Endothelial cell of umbilical vein (primary cell): ENCODE measurements at regions of chr9 and their contacts with region 1.

Region 1: GRCh38 chr9:36166101-36166927 is 2.9 kb upstream of the CCIN start:
- DNase-seq: peak; percentile 80
- H3K4me3 ChIP-seq: peak overlapping the region in 2 of 3 experiments; percentile 4 to 51
- H3K27ac ChIP-seq: no peak overlapping the region
- H3K4me1 ChIP-seq: peaks cover 16% of the 10 kb centered on the region
- H3K27me3 ChIP-seq: no peaks in the 10 kb centered on the region
- CTCF ChIP-seq: peak; percentile 89 to 95
- POLR2A ChIP-seq: no peak

Region 2: DNA sequence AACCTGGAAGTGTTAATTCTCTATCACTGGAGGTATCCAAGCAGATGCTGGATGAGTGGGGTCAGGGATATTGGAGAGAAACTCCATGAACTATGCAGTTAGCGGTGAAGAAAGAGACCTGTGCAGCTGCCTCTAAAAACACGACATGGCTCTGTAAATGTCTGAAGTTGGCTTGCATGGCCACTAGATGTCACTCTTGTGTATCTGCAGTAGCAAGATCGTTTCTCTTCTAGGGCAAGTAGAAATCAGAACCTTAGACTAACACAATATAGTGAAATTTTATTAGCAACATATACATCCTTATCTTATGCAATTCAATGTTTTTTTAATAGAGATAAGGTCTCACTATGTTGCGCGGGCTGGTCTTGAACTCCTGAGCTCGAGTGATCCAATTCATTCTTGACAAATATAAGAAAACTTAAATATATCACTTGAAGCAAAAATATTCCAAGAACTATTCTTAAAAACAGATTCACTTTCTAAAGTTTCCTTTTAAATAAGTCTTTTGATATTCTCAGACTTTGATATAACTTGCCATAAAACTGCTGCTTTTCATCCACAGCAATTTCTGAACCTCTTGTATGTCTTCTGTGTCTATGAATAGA is 211.3 kb before region 1 on chr9:
- CTCF ChIA-PET with region 1: interaction called, 34 read pairs
- POLR2A ChIA-PET with region 1: no interaction called
- dilution Hi-C with region 1: no loop called
- intact Hi-C with region 1: loop called (anchors 1 kb)
- DNase-seq: peak; percentile 79
- H3K4me3 ChIP-seq: no peak overlapping the region
- H3K27ac ChIP-seq: no peak overlapping the region
- H3K4me1 ChIP-seq: peaks cover 19% of the 10 kb centered on the region
- H3K27me3 ChIP-seq: no peaks in the 10 kb centered on the region
- CTCF ChIP-seq: peak; percentile 71 to 75
- POLR2A ChIP-seq: no peak

Region 3: GRCh38 chr9:36023260-36024048 is 142.9 kb before region 1 on chr9:
- CTCF ChIA-PET with region 1: interaction called, 13 read pairs
- POLR2A ChIA-PET with region 1: no interaction called
- dilution Hi-C with region 1: no loop called
- intact Hi-C with region 1: loop called (anchors 1 kb)
- DNase-seq: peak; percentile 71
- H3K4me3 ChIP-seq: no peak overlapping the region
- H3K27ac ChIP-seq: no peak overlapping the region
- H3K4me1 ChIP-seq: no peaks in the 10 kb centered on the region
- H3K27me3 ChIP-seq: no peaks in the 10 kb centered on the region
- CTCF ChIP-seq: peak; percentile 71 to 79
- POLR2A ChIP-seq: no peak

Region 4: DNA sequence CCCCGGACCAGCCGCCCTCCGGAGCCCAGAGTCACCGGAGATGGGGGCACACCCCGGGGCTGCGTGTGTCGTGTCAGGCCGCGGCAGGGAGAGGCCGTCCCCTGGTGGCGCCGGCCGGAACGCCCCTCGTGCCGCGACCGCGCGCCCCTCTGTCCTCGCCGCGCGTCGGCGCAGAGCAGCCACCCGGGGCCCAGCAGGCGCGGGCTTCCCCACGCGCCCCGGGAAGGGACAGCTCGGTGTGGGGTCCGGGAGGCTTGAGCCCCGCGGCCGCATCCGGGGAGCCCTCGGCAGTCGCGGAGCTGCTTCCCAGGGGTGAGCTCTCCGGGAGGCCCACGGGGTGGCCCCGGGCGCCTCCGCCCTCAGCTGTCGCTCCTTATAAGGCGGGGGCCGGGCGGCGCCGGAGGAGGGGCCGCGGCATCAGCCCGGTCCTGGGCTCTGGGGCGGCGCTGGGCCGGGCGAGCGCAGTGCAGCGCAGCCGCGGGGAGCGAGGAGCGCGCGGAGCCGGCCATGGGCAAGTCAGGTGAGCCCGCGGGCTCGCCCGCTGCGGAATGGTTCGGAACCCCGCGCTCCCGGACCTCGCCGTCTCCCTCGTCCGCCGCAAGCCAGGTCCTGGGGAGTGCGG is 29.9 kb before region 1 on chr9 and contains the start of gene GLIPR2:
- CTCF ChIA-PET with region 1: interaction called, 76 read pairs
- POLR2A ChIA-PET with region 1: no interaction called
- dilution Hi-C with region 1: no loop called
- intact Hi-C with region 1: loop called (anchors 1 kb)
- DNase-seq: peak; percentile 55
- H3K4me3 ChIP-seq: peak within 1 kb of the TSS; percentile 40 to 62 (median 61)
- H3K27ac ChIP-seq: peak within 1 kb of the TSS; percentile 16
- H3K4me1 ChIP-seq: peaks cover 11% of the 10 kb centered on the region
- H3K27me3 ChIP-seq: no peaks in the 10 kb centered on the region
- CTCF ChIP-seq: peak; percentile 12 to 23
- POLR2A ChIP-seq: no peak
- total RNA-seq, gene GLIPR2: 20.0 and 22.0 TPM in 2 replicates

Region 5: DNA sequence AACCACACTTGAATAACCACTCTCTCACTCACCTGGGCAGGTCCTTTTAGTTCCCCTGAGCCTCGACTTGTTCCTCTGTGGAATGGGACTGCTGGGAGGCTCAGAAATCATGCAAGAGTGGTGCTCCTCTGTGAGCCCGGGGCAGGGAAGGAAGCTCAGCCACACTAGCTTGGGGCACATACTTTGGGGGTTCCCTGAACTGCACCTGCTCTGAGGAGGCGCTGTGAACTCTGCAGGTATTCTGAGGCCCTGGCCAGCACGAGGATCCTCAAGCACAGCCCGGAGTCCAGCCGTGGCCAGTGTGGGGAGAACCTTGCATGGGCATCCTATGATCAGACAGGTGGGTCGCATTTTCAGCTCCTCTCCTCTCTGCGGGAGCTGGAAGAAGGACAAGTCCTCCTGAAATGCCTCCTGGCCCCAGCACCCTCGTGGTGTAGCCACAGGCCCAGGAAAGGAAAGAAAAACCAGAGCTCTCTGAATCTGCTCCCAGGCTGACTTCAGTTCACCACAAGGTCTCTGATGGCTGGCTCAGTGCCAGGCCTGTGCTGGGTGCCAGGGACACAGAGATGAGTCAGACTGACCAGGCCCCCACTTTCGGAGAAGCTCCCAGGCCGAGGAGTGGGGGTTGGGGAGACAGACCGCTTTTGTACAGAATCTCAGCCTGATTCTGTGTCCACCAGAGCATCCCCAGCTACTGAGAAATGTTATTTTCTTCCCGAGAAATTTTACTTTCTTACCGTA is 17.8 kb before region 1 on chr9:
- CTCF ChIA-PET with region 1: interaction called, 76 read pairs
- POLR2A ChIA-PET with region 1: no interaction called
- dilution Hi-C with region 1: no loop called
- intact Hi-C with region 1: loop called (anchors 2 kb)
- DNase-seq: peak; percentile 86
- H3K4me3 ChIP-seq: no peak overlapping the region
- H3K27ac ChIP-seq: peak overlapping the region; percentile 69
- H3K4me1 ChIP-seq: peaks cover 35% of the 10 kb centered on the region
- H3K27me3 ChIP-seq: no peaks in the 10 kb centered on the region
- CTCF ChIP-seq: no peak
- POLR2A ChIP-seq: no peak

Region 6: GRCh38 chr9:36154331-36154952 is 11.9 kb before region 1 on chr9:
- CTCF ChIA-PET with region 1: interaction called, 54 read pairs
- POLR2A ChIA-PET with region 1: no interaction called
- dilution Hi-C with region 1: no loop called
- intact Hi-C with region 1: loop called (anchors 1 kb)
- DNase-seq: peak; percentile 82
- H3K4me3 ChIP-seq: no peak overlapping the region
- H3K27ac ChIP-seq: peak overlapping the region; percentile 57
- H3K4me1 ChIP-seq: peaks cover 32% of the 10 kb centered on the region
- H3K27me3 ChIP-seq: no peaks in the 10 kb centered on the region
- CTCF ChIP-seq: no peak
- POLR2A ChIP-seq: no peak

Region 7: GRCh38 chr9:36190388-36191287 is 24.3 kb after region 1 on chr9 and contains the start of gene CLTA:
- CTCF ChIA-PET with region 1: interaction called, 19 read pairs
- POLR2A ChIA-PET with region 1: interaction called, 4 read pairs
- dilution Hi-C with region 1: no loop called
- intact Hi-C with region 1: no loop called
- DNase-seq: peak; percentile 98
- H3K4me3 ChIP-seq: peak within 1 kb of the TSS; percentile 80 to 93 (median 90)
- H3K27ac ChIP-seq: peak within 1 kb of the TSS; percentile 78
- H3K4me1 ChIP-seq: peaks cover 31% of the 10 kb centered on the region
- H3K27me3 ChIP-seq: no peaks in the 10 kb centered on the region
- CTCF ChIP-seq: peak; percentile 40 to 50
- POLR2A ChIP-seq: peak; percentile 98
- total RNA-seq, gene CLTA: 281 and 317 TPM in 2 replicates

Region 8: DNA sequence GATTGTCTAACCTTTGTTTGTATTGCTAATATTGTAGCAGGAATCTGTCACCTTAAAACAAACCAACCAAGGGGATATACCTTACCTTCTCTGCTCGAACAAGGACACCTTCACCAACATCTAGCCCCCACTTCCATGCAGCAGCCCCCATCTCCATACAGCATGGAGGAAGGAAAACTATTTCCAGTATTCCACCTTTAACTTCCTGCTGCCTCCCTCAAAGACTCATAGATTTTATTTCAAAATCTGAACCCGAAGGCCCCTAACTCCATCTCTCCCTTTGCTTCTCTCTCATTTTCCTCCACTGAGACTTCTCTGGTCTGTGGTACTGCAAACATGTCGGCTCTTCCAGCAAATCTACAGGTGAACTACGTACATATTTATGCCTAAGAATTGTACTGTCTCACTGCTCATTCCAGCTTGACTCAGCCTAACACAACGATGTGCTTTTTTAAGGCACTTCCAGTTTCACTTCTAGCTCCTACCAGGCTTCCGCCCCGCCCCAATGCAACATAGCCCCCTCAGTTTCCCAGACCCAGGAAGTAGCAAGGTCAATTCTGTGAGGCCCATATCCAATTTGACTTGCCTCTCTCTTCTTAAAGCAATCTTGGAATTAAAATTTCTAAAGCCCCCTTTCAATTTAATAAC is 304.5 kb after region 1 on chr9:
- CTCF ChIA-PET with region 1: no interaction called
- POLR2A ChIA-PET with region 1: no interaction called
- dilution Hi-C with region 1: no loop called
- intact Hi-C with region 1: no loop called
- DNase-seq: peak; percentile 65
- H3K4me3 ChIP-seq: peak overlapping the region in 2 of 3 experiments; percentile 23 to 56
- H3K27ac ChIP-seq: peak overlapping the region; percentile 15
- H3K4me1 ChIP-seq: peaks cover 15% of the 10 kb centered on the region
- H3K27me3 ChIP-seq: no peaks in the 10 kb centered on the region
- CTCF ChIP-seq: no peak
- POLR2A ChIP-seq: no peak